Thyroid gland (tissue), 4 donors: ENCODE measurements at regions of chr16 and their contacts with region 1.

Region 1: DNA sequence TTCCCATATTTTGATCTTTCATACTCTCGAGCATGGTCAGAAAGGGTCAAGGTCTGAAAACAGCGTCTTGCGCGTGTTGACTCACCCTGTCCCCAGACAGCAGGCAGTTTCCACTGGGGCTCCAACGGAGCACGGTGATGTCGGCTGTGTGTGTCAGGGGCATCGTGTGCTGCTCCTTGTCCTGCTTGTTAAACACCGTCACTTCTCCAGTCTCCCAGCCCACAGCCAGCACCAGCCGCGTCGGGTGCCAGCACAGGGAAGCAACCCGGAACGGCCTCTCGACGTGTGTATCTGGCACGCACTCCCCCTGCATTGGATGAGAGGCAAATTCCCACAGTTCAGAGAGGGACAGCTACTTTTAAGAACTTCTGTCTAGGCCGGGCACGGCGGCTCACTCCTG is 9.6 kb downstream of the IFT140 start:
- DNase-seq: peak; percentile 92 to 95
- H3K4me3 ChIP-seq: no peak overlapping the region
- H3K27ac ChIP-seq: peak overlapping the region; percentile 68 to 80 (median 74)
- H3K4me1 ChIP-seq: peaks cover 20 to 22% of the 10 kb centered on the region in 2 donors
- H3K27me3 ChIP-seq: no peaks in the 10 kb centered on the region
- CTCF ChIP-seq: no peak
- POLR2A ChIP-seq: no peak

Region 2: DNA sequence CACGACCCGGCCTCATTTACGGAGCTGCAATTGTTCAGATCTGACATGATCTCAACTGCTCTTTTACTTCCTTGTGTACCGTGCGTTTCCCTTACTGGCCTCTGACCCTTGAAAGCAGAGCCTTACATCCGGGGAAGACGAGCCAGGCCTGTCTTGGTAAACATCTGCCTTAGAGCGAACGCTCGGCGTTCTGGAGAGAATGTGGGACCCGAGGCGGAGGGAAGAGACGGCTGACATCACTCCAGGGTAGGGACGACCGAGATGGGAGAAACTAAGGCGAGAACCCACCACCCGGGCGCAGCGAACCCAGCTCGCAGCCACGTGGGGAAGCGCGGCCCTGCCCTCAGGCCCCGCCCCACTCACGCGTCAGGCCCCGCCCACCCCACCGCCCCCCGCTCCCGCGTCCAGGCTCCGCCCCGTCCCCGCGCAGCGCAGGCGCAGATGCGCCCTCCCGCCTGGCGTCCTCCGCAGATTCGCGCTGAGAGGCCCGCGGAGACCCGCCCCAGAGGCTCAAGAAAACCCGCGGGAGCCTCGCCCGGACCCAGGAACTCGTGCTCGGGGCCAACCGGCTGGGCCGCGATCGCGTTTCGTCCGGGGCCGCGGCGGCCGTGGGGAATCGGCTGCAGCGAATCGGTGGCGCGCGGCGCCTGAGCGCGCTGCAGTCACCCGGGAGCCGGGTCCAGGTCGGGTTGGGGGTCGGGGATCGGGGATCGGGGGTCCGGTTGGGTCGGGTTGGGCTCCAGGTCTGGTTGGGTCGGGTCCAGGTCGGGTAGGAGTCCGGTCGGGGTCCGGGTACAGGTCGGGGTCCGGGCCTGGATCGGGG is 109.2 kb before region 1 on chr16 and contains the start of gene TELO2:
- intact Hi-C with region 1: loop called (anchors 5 kb)
- DNase-seq: peak; percentile 65 to 71
- H3K4me3 ChIP-seq: peak within 1 kb of the TSS; percentile 48 to 74 (median 64)
- H3K27ac ChIP-seq: peak within 1 kb of the TSS; percentile 78 to 81 (median 81)
- H3K4me1 ChIP-seq: peaks cover 10 to 20% of the 10 kb centered on the region in 2 donors
- H3K27me3 ChIP-seq: no peaks in the 10 kb centered on the region
- CTCF ChIP-seq: no peak
- POLR2A ChIP-seq: peak in 1 of 2 donors; percentile 37
- total RNA-seq, gene TELO2: 12.5 to 19.4 (median 12.8) TPM